HCT116 (cell line): ENCODE measurements at regions of chr2 and their contacts with region 1.

Region 1: GRCh38 chr2:168136392-168136977 is 110.9 kb downstream of the STK39 start:
- DNase-seq: peak; percentile 46
- ATAC-seq: peak; percentile 72
- H3K4me3 ChIP-seq: no peak overlapping the region
- H3K27ac ChIP-seq: peak overlapping the region; percentile 1; the same call in 1 of the 2 replicates
- H3K4me1 ChIP-seq: peaks cover 4 to 28% of the 10 kb centered on the region in 2 experiments
- H3K27me3 ChIP-seq: no peaks in the 10 kb centered on the region
- CTCF ChIP-seq: peak; percentile 37 to 61 (median 47); a peak in 5 of 6 replicates
- POLR2A ChIP-seq: no peak
- RAD21 ChIP-seq: peak; percentile 66

Region 2: GRCh38 chr2:166282154-166282553 is 1854.3 kb before region 1 on chr2:
- CTCF ChIA-PET with region 1: no interaction called
- POLR2A ChIA-PET with region 1: no interaction called
- RAD21 ChIA-PET with region 1: no interaction called
- intact Hi-C with region 1: no loop called
- DNase-seq: no peak
- ATAC-seq: no peak
- H3K4me3 ChIP-seq: no peak overlapping the region
- H3K27ac ChIP-seq: no peak overlapping the region
- H3K4me1 ChIP-seq: no peaks in the 10 kb centered on the region
- H3K27me3 ChIP-seq: peaks cover 3% of the 10 kb centered on the region; the same call in 1 of the 2 replicates
- CTCF ChIP-seq: no peak
- POLR2A ChIP-seq: no peak
- RAD21 ChIP-seq: no peak

Region 3: DNA sequence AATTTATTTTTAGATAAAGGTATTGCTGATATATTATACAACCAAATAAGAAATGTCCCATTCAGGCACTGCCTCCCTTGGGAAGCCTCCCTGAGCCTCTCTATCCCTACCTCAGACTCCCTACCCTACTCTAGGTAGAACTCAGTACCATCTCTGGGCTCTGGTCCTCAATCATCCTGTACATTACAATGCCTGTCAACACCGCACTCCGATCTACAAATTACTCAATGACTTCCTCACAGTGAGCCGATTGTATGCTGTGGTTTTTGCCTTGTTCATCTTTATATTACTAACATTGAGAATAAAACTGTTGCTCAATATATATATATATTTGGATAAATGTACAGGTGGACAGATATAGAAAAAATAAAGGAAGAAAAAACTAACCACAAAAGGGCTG is 96.6 kb before region 1 on chr2:
- CTCF ChIA-PET with region 1: no interaction called
- POLR2A ChIA-PET with region 1: no interaction called
- RAD21 ChIA-PET with region 1: no interaction called
- intact Hi-C with region 1: no loop called
- DNase-seq: no peak
- ATAC-seq: no peak
- H3K4me3 ChIP-seq: no peak overlapping the region
- H3K27ac ChIP-seq: no peak overlapping the region
- H3K4me1 ChIP-seq: no peaks in the 10 kb centered on the region
- H3K27me3 ChIP-seq: no peaks in the 10 kb centered on the region
- CTCF ChIP-seq: no peak
- POLR2A ChIP-seq: no peak
- RAD21 ChIP-seq: no peak

Region 4: DNA sequence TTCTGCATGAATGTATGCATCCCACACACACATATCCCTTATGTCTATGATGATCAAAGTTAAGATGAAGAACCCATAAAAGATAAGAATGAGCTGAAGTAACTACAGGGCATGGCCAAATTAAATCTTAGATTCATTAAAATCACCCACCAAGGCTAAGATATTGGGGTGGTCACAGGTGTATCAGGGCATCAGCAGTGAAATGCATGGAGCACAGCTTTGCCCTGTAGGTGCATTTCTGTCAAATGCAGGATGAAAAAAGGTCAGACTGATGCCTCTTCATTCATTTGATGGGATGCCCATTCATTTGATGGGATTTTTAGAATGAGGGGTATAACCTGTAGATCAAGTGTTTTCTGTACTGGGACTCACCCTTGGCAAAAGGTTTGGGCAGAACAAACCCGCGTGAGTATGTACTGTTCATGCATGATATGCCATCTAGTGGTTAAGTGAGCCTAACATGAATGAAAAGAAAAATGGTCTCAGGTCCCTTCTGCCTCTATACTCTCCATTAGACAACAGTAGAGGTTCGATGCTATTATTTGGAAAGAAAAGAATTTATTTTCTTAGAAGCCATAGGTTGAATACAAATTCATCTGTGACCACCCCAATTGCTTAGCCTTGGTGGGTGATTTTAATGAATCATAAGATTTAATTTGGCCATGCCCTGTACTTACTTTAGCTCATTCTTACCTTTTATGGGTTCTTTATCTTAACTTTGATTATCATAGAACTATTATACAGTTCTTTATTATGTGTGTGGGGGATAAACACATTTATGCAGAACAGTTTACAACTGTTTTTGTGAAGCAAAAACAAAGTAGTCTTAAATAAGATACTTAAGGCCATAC is 622.7 kb after region 1 on chr2:
- CTCF ChIA-PET with region 1: no interaction called
- POLR2A ChIA-PET with region 1: no interaction called
- RAD21 ChIA-PET with region 1: no interaction called
- intact Hi-C with region 1: loop called (anchors 10 kb)
- DNase-seq: peak; percentile 21
- ATAC-seq: peak; percentile 93
- H3K4me3 ChIP-seq: no peak overlapping the region
- H3K27ac ChIP-seq: no peak overlapping the region
- H3K4me1 ChIP-seq: no peaks in the 10 kb centered on the region
- H3K27me3 ChIP-seq: no peaks in the 10 kb centered on the region
- CTCF ChIP-seq: peak; percentile 52 to 67 (median 61); a peak in 5 of 6 replicates
- POLR2A ChIP-seq: no peak
- RAD21 ChIP-seq: peak; percentile 74